ENCODE measurements at regions of chr15 and their contacts with region 1.

Region 1: GRCh38 chr15:64067564-64068030 is 21.3 kb upstream of the DAPK2 start:
- DNase-seq: peak; percentile 49 to 83 (median 71)
- ATAC-seq: peak; percentile 91
- H3K4me3 ChIP-seq: no peak overlapping the region
- H3K4me3 Mint-ChIP-seq: no peak overlapping the region
- H3K27ac ChIP-seq: no peak overlapping the region
- H3K27ac Mint-ChIP-seq: no peak overlapping the region
- H3K4me1 ChIP-seq: no peaks in the 10 kb centered on the region
- H3K4me1 Mint-ChIP-seq: peaks cover 5% of the 10 kb centered on the region
- H3K27me3 ChIP-seq: no peaks in the 10 kb centered on the region
- H3K27me3 Mint-ChIP-seq: no peaks in the 10 kb centered on the region
- CTCF ChIP-seq: peak; percentile 81

Region 2: GRCh38 chr15:63288778-63289378 is 778.7 kb before region 1 on chr15:
- CTCF ChIA-PET with region 1: interaction called, 6 read pairs
- POLR2A ChIA-PET with region 1: no interaction called
- intact Hi-C with region 1: loop called (anchors 5 kb)
- DNase-seq: peak in 2 of 9 experiments; percentile 57 to 72
- ATAC-seq: peak; percentile 75
- H3K4me3 ChIP-seq: no peak overlapping the region
- H3K4me3 Mint-ChIP-seq: no peak overlapping the region
- H3K27ac ChIP-seq: peak overlapping the region in 1 of 2 experiments; percentile 0
- H3K27ac Mint-ChIP-seq: no peak overlapping the region
- H3K4me1 ChIP-seq: peaks cover 7% of the 10 kb centered on the region
- H3K4me1 Mint-ChIP-seq: peaks cover 7% of the 10 kb centered on the region
- H3K27me3 ChIP-seq: no peaks in the 10 kb centered on the region
- H3K27me3 Mint-ChIP-seq: no peaks in the 10 kb centered on the region
- CTCF ChIP-seq: peak; percentile 81

Region 3: GRCh38 chr15:63610200-63610841 is 457.3 kb before region 1 on chr15:
- CTCF ChIA-PET with region 1: interaction called, 21 read pairs
- POLR2A ChIA-PET with region 1: no interaction called
- intact Hi-C with region 1: loop called (anchors 1 to 2 kb)
- DNase-seq: peak; percentile 49 to 87 (median 75)
- ATAC-seq: peak; percentile 89
- H3K4me3 ChIP-seq: no peak overlapping the region
- H3K4me3 Mint-ChIP-seq: no peak overlapping the region
- H3K27ac ChIP-seq: peak overlapping the region; percentile 4 to 68
- H3K27ac Mint-ChIP-seq: peak overlapping the region; percentile 82
- H3K4me1 ChIP-seq: peaks cover 27% of the 10 kb centered on the region
- H3K4me1 Mint-ChIP-seq: peaks cover 36% of the 10 kb centered on the region
- H3K27me3 ChIP-seq: no peaks in the 10 kb centered on the region
- H3K27me3 Mint-ChIP-seq: no peaks in the 10 kb centered on the region
- CTCF ChIP-seq: peak; percentile 77

Region 4: GRCh38 chr15:63668601-63669000 is 399.0 kb before region 1 on chr15:
- CTCF ChIA-PET with region 1: no interaction called
- POLR2A ChIA-PET with region 1: interaction called, 4 read pairs
- intact Hi-C with region 1: loop called in 1 of 2 experiments (anchors 5 kb)
- DNase-seq: peak in 2 of 9 experiments; percentile 27 to 60
- ATAC-seq: peak; percentile 73
- H3K4me3 ChIP-seq: peak overlapping the region; percentile 4 to 32
- H3K4me3 Mint-ChIP-seq: peak overlapping the region; percentile 64
- H3K27ac ChIP-seq: peak overlapping the region; percentile 55 to 82
- H3K27ac Mint-ChIP-seq: peak overlapping the region; percentile 86
- H3K4me1 ChIP-seq: peaks cover 26% of the 10 kb centered on the region
- H3K4me1 Mint-ChIP-seq: peaks cover 50% of the 10 kb centered on the region
- H3K27me3 ChIP-seq: no peaks in the 10 kb centered on the region
- H3K27me3 Mint-ChIP-seq: no peaks in the 10 kb centered on the region
- CTCF ChIP-seq: no peak

Region 5: DNA sequence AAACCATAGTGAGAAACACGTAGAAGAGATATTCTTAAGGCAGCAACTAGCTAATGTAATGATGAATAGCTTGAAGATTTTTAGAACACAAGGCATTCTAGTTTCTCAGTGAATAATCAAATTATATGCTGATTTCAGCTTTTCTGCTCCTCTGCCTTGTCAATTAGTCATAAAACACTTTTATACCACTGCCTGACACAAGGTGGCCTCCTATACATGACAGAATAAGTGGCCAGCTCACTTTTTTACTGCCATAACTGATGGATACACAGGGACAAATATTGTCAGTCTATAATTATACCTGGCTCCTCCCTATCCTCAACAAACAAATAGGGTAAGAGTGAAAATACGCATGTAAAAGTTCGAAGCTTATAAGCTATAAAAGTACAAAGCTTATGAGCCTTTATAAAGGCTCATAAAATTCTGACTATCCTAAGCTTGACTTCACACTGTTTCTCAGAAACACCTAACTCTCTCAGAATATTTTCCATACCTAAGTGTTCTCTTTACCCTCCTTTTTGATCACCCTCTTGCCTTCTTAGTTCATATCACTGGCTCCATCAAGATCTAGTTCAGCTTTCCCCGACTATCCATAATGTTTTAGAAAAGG is 315.4 kb before region 1 on chr15:
- CTCF ChIA-PET with region 1: interaction called, 96 read pairs
- POLR2A ChIA-PET with region 1: interaction called, 6 read pairs
- intact Hi-C with region 1: loop called (anchors 1 kb)
- DNase-seq: peak in 7 of 9 experiments; percentile 18 to 75 (median 28)
- ATAC-seq: peak; percentile 86
- H3K4me3 ChIP-seq: no peak overlapping the region
- H3K4me3 Mint-ChIP-seq: no peak overlapping the region
- H3K27ac ChIP-seq: no peak overlapping the region
- H3K27ac Mint-ChIP-seq: peak overlapping the region; percentile 78
- H3K4me1 ChIP-seq: no peaks in the 10 kb centered on the region
- H3K4me1 Mint-ChIP-seq: peaks cover 6% of the 10 kb centered on the region
- H3K27me3 ChIP-seq: no peaks in the 10 kb centered on the region
- H3K27me3 Mint-ChIP-seq: no peaks in the 10 kb centered on the region
- CTCF ChIP-seq: peak; percentile 85

Region 6: DNA sequence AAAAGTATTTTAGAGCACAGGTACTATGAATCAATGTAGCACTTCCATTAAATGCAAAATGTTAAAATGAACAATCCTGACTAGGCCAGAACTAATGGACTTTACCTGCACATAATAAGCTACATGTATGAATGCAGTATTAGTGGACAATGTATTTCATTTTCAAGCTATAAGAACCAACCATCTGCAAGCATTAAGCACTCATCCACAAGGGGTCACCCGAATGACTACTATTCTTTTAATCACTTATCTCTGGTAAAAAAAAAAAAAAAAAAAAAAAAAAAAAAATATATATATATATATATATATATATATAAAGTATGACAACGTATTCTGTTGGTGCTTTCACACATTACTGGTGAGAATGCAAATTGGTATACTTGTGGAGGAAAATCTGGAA is 241.1 kb before region 1 on chr15:
- CTCF ChIA-PET with region 1: interaction called, 3 read pairs
- POLR2A ChIA-PET with region 1: no interaction called
- intact Hi-C with region 1: loop called (anchors 1 to 2 kb)
- DNase-seq: peak in 3 of 9 experiments; percentile 19 to 74 (median 64)
- ATAC-seq: no peak
- H3K4me3 ChIP-seq: no peak overlapping the region
- H3K4me3 Mint-ChIP-seq: peak overlapping the region; percentile 11
- H3K27ac ChIP-seq: no peak overlapping the region
- H3K27ac Mint-ChIP-seq: no peak overlapping the region
- H3K4me1 ChIP-seq: peaks cover 48% of the 10 kb centered on the region
- H3K4me1 Mint-ChIP-seq: peaks cover 79% of the 10 kb centered on the region
- H3K27me3 ChIP-seq: no peaks in the 10 kb centered on the region
- H3K27me3 Mint-ChIP-seq: no peaks in the 10 kb centered on the region
- CTCF ChIP-seq: no peak

Region 7: DNA sequence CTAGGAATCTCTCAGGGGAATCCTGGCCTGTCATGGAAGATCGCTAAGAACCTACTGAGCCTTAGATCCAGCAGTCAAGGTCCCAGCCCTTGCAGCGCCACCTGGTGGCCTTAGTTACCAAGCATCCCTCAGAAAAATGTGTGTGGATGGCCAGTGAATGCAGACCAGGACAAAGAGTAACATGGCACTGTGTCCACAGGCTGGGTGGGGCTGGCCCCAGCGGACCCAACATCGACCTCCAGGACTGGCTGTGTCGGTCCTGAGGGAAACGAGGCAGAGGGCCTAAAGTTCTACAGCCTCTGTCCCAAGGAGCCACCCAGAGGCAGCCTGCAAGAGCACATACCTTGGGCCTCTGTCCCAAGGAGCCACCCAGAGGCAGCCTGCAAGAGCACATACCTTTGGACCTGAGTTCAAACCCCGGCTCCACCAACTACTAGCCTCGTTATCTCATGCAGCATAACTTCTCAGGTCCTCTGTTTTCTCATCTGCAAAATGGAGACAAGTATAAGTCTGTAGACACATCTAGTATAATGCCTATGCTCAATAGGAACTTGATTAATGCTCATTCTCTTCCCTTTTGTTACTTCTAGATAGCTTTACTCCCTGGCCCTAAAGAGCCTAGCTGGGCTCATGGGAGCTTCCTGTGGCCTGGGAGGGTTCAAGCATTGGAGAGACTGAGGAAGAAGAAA is 176.4 kb before region 1 on chr15:
- CTCF ChIA-PET with region 1: interaction called, 3 read pairs
- POLR2A ChIA-PET with region 1: no interaction called
- intact Hi-C with region 1: loop called (anchors 2 to 5 kb)
- DNase-seq: peak; percentile 48 to 83 (median 75)
- ATAC-seq: no peak
- H3K4me3 ChIP-seq: peak overlapping the region in 1 of 2 experiments; percentile 8
- H3K4me3 Mint-ChIP-seq: peak overlapping the region; percentile 5
- H3K27ac ChIP-seq: peak overlapping the region; percentile 35 to 68
- H3K27ac Mint-ChIP-seq: peak overlapping the region; percentile 90
- H3K4me1 ChIP-seq: peaks cover 65% of the 10 kb centered on the region
- H3K4me1 Mint-ChIP-seq: peaks cover 69% of the 10 kb centered on the region
- H3K27me3 ChIP-seq: no peaks in the 10 kb centered on the region
- H3K27me3 Mint-ChIP-seq: no peaks in the 10 kb centered on the region
- CTCF ChIP-seq: peak; percentile 71

Region 8: DNA sequence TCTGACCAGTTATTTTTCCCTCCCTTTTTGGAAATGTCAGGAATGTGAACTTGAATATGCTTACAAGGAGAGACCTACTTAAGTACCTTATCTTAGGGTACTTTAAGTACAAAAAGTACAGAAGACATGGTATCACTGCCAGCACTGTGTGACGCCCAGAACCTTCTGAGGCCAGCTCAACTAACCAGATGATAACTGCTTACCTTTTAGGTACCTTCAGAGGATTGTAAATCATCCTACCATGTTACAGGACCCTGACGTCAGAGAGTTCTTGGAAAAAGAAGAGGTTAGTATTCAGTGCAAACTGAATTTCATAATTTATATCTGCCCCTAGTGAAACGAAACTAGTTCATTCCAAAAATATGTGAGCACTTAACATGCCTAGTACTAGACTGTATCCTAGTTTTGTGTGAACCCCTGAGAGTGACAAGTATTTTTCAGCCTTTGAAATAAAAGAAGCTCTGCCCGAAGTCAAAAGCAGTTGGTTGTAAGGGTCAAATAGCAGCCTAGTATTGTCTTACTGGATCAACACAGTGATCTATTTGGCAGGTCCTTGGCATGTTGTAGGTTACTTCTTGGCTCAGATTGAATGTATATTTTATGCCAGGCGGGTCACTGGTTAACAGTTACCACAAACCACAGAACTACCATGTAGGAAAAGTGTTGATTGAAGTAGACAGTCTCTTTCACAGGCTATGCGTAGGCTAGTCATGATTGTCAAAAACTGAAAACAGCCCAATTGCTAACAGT is 60.1 kb after region 1 on chr15:
- CTCF ChIA-PET with region 1: no interaction called
- POLR2A ChIA-PET with region 1: no interaction called
- intact Hi-C with region 1: no loop called
- DNase-seq: no peak
- ATAC-seq: no peak
- H3K4me3 ChIP-seq: no peak overlapping the region
- H3K4me3 Mint-ChIP-seq: no peak overlapping the region
- H3K27ac ChIP-seq: no peak overlapping the region
- H3K27ac Mint-ChIP-seq: peak overlapping the region; percentile 29
- H3K4me1 ChIP-seq: no peaks in the 10 kb centered on the region
- H3K4me1 Mint-ChIP-seq: no peaks in the 10 kb centered on the region
- H3K27me3 ChIP-seq: no peaks in the 10 kb centered on the region
- H3K27me3 Mint-ChIP-seq: no peaks in the 10 kb centered on the region
- CTCF ChIP-seq: no peak